Breast epithelium (tissue), 4 donors: ENCODE measurements at regions of chr13 and their contacts with region 1.

Region 1: GRCh38 chr13:23007426-23007825 is 173.4 kb upstream of the SGCG start:
- DNase-seq: no peak
- H3K4me3 ChIP-seq: no peak overlapping the region
- H3K27ac ChIP-seq: no peak overlapping the region
- H3K4me1 ChIP-seq: no peaks in the 10 kb centered on the region
- H3K27me3 ChIP-seq: no peaks in the 10 kb centered on the region
- CTCF ChIP-seq: no peak
- POLR2A ChIP-seq: no peak

Region 2: GRCh38 chr13:21632196-21632595 is 1375.2 kb before region 1 on chr13:
- intact Hi-C with region 1: loop called (anchors 5 kb)
- DNase-seq: no peak
- H3K4me3 ChIP-seq: no peak overlapping the region
- H3K27ac ChIP-seq: no peak overlapping the region
- H3K4me1 ChIP-seq: no peaks in the 10 kb centered on the region
- H3K27me3 ChIP-seq: peaks cover 0 to under 1% of the 10 kb centered on the region in 2 donors
- CTCF ChIP-seq: no peak
- POLR2A ChIP-seq: no peak

Region 3: DNA sequence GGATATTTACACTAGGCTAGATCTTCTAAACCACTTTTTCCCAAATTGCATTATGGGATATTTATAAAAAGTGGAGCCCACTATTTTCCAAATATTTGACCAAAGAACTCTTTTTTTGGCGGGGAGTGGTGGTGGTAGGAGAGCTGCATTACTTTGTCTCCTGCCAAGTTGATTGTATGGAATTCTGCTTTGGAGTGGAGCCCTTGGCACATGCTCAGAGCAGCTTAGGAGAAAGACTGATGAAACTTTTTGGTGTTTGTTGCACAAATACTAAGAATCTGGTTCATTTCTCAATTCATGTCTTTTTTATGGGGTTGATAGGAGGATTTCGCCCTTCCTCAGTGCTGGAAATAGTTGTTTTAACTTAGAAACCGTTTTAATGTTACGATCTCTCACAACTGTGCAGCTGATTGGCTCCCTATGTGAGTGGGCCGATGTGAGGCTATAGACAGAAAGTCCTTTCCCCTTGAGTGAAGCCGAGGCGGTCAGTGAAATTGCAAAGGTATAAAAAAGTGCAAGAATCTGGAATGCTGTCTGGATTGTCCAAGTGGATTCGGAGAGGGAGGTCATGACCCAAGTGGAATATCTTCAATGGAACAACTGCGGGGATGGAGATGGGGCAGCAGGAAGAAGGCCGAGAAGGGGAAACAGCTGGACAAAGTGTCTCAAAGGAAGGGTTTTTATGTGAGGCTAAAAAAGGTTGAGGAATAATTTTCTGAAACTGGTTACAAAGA is 920.7 kb before region 1 on chr13:
- intact Hi-C with region 1: loop called (anchors 5 kb)
- DNase-seq: no peak
- H3K4me3 ChIP-seq: no peak overlapping the region
- H3K27ac ChIP-seq: no peak overlapping the region
- H3K4me1 ChIP-seq: no peaks in the 10 kb centered on the region
- H3K27me3 ChIP-seq: no peaks in the 10 kb centered on the region
- CTCF ChIP-seq: no peak
- POLR2A ChIP-seq: no peak

Region 4: GRCh38 chr13:22964245-22964966 is 43.0 kb before region 1 on chr13:
- intact Hi-C with region 1: no loop called
- DNase-seq: no peak
- H3K4me3 ChIP-seq: no peak overlapping the region
- H3K27ac ChIP-seq: no peak overlapping the region
- H3K4me1 ChIP-seq: no peaks in the 10 kb centered on the region
- H3K27me3 ChIP-seq: no peaks in the 10 kb centered on the region
- CTCF ChIP-seq: no peak
- POLR2A ChIP-seq: no peak